ENCODE measurements at regions of chr13 and their contacts with region 1.

Region 1: GRCh38 chr13:30465585-30466357 is at the start of gene HMGB1:
- DNase-seq: peak; percentile 98
- H3K4me3 ChIP-seq: peak within 1 kb of the TSS; percentile 94
- H3K27ac ChIP-seq: peak within 1 kb of the TSS; percentile 100
- H3K4me1 ChIP-seq: peaks cover 40% of the 10 kb centered on the region
- H3K27me3 ChIP-seq: no peaks in the 10 kb centered on the region
- CTCF ChIP-seq: no peak
- total RNA-seq, gene HMGB1: 161 TPM

Region 2: DNA sequence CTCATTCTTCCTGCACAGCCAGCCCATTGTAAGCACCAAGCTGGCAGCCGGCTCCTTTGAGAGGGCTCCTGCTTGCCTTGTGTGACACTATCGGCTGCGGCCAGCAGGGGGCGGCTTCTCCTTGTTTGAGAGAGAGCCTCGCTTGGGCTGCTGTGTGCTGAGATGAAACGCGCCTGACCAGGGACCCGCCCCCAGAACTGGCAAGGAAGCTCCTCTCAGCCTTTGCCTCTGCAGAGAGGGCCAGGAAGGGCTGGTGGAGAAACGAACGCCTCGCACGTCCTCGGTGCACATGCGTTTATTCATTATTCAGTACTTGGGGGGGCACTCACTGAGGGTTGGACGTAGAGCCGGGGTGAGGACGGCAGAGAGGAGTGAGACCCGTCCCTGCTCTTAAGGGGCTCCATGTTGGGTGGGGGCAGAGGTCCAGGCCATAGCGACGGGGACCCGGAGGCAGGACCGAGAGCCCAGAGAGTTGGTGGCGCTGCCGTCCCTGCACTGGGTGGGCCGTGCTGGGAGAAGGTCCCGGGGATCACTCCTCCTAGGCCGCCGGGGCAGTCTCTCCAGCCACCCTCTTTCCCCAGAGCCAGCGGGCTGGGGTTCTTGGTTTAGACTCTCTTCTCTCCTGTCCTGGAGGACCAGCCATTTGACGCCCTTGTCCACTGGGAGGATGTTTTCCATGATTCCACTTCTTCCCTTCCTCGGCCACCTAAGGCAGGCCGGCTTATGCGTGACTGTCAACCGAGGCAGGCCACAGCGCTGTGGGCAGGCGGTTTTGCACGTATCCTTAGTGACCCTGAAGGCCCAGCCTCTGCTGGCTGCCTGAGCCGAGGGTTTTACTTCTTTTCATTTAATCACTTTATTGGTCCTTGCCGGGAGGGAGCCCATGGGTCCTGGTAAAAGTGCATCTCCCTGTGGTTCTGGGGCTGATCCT is 332.9 kb before region 1 on chr13:
- intact Hi-C with region 1: loop called (anchors 10 kb)
- DNase-seq: peak; percentile 96
- H3K4me3 ChIP-seq: no peak overlapping the region
- H3K27ac ChIP-seq: no peak overlapping the region
- H3K4me1 ChIP-seq: peaks cover 9% of the 10 kb centered on the region
- H3K27me3 ChIP-seq: no peaks in the 10 kb centered on the region
- CTCF ChIP-seq: peak; percentile 95

Region 3: DNA sequence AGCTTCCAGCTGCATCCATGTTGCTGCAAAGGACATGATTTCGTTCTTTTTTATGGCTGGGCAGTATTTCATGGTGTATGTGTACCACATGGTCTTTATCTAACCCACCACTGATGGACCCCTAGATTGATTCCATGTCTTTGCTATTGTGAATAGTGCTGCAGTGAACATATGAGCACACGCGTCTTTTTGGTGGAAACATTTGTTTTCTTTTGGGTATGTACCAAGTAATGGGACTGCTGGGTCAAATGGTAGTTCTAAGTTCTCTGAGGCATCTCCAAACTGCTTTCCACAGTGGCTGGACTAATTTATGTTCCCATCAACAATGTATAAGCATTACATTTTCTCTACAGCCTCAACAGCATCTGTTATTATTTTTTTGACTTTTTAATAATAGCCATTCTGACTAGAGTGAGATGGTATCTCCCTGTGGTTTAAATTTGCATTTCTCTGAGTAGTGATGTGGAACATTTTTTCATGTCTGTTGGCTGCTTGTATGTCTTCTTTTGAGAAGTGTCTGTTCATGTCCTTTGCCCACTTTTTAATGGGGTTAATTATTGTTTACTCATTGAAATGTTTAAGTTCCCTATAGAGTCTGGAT is 50.2 kb before region 1 on chr13:
- intact Hi-C with region 1: loop called (anchors 10 kb)
- DNase-seq: no peak
- H3K4me3 ChIP-seq: no peak overlapping the region
- H3K27ac ChIP-seq: no peak overlapping the region
- H3K4me1 ChIP-seq: no peaks in the 10 kb centered on the region
- H3K27me3 ChIP-seq: no peaks in the 10 kb centered on the region
- CTCF ChIP-seq: no peak